PC-9 (cell line): ENCODE measurements at regions of chr17 and their contacts with region 1.

Region 1: GRCh38 chr17:44123356-44124117 is at the start of gene HDAC5:
- DNase-seq: peak; percentile 75 to 91
- H3K4me3 ChIP-seq: peak within 1 kb of the TSS; percentile 84
- H3K27ac ChIP-seq: peak within 1 kb of the TSS; percentile 68
- H3K4me1 ChIP-seq: peaks cover 7% of the 10 kb centered on the region
- H3K27me3 ChIP-seq: peaks cover 4% of the 10 kb centered on the region; the same call in 1 of the 2 replicates
- CTCF ChIP-seq: peak; percentile 75
- total RNA-seq, gene HDAC5: 24.0 and 40.5 TPM in 2 replicates

Region 2: GRCh38 chr17:44086364-44087311 is 36.9 kb before region 1 on chr17:
- CTCF ChIA-PET with region 1: interaction called, 11 read pairs
- POLR2A ChIA-PET with region 1: interaction called, 3 read pairs
- intact Hi-C with region 1: no loop called
- DNase-seq: peak; percentile 56 to 58
- H3K4me3 ChIP-seq: no peak overlapping the region
- H3K27ac ChIP-seq: no peak overlapping the region
- H3K4me1 ChIP-seq: peaks cover 16% of the 10 kb centered on the region
- H3K27me3 ChIP-seq: no peaks in the 10 kb centered on the region
- CTCF ChIP-seq: no peak